SK-N-SH (cell line): ENCODE measurements at regions of chr1 and their contacts with region 1.

Region 1: GRCh38 chr1:21659099-21659923 is 9.8 kb downstream of the RAP1GAP start:
- DNase-seq: peak; percentile 96
- H3K4me3 ChIP-seq: peak overlapping the region; percentile 30 to 52
- H3K27ac ChIP-seq: no peak overlapping the region
- H3K4me1 ChIP-seq: peaks cover 0 to 10% of the 10 kb centered on the region in 2 experiments; a peak in 1 of 4 replicates
- H3K27me3 ChIP-seq: peaks cover 7% of the 10 kb centered on the region
- CTCF ChIP-seq: peak; percentile 94
- EP300 ChIP-seq: no peak
- RAD21 ChIP-seq: peak; percentile 85

Region 2: DNA sequence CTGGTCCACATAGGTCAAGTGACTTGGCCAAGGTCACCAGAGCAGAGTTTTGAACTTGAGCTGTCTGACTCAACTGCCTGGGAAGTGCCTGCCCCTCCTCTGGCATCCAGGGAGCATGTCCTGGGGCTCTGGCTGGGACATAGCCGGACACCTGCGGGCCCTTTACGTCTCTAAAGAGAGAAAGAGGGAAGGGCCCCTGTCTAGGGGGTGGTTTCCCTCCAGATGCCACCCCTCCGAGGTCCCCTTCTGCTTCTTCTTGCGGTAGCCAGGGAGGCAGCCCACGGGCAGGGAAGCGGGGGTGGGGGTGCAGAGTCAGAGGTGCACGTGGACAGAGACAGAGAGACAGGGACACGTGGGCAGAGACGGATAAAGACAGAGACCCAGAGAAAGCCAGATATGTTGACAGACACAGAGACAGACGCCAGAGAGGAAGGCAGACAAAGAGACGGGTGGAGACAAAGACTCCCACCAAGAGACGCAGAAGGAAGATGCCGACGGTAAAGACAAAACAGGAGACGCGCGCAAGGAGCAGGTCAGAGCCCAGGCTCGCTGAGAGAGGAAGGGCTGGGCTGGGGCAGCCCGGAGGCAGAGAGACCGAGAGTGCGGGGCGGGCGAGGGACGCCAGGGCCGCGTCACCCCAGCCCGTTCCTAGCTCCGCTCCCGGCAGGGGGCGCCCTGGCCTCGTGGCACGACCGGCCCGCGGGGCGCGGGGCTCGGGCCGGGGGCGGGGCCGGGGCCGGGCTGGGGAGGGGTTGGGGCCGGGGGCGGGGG is 150.5 kb before region 1 on chr1:
- CTCF ChIA-PET with region 1: interaction called, 27 read pairs
- POLR2A ChIA-PET with region 1: no interaction called
- DNase-seq: peak; percentile 97
- H3K4me3 ChIP-seq: no peak overlapping the region
- H3K27ac ChIP-seq: no peak overlapping the region
- H3K4me1 ChIP-seq: peaks cover 7 to 9% of the 10 kb centered on the region in 2 experiments; a peak in 2 of 4 replicates
- H3K27me3 ChIP-seq: no peaks in the 10 kb centered on the region; the same call in 1 of the 2 replicates
- CTCF ChIP-seq: peak; percentile 55
- EP300 ChIP-seq: no peak
- RAD21 ChIP-seq: peak; percentile 58

Region 3: DNA sequence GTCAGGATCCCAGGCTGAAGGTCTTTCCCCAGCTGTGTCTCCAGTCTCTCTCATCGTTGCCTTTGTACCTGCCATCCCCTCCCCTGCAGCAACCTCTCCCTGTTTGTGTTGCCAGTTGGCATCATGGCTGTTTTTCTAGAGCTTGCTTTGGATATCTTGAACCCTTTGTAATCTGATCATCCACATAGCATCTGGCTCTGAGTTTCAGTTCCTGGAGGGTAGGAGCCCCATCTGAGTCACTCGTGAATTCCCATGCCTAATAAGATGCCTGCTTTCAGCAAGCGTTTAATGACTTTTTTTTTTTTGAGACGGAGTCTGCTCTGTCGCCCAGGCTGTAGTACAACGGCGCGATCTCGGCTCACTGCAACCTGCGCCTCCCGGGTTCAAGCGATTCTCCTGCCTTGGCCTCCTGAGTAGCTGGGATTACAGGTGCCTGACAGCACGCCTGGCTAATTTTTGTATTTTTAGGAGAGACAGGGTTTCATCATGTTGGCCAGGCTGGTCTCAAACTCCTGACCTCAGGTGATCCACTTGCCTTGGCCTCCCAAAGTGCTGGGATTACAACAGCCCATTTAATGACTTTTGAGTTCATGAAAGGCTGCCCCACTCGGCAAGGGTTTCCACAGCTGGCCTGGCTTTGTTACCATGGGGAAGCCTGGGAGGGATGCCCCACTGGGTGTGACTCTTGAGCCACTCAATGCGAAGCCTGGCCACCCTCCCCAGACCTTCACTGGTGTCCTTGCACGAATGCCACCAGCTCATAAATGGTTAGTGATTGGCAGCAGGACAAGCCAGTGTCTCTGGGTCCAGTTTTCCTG is 138.2 kb before region 1 on chr1:
- CTCF ChIA-PET with region 1: interaction called, 10 read pairs
- POLR2A ChIA-PET with region 1: no interaction called
- DNase-seq: no peak
- H3K4me3 ChIP-seq: no peak overlapping the region
- H3K27ac ChIP-seq: no peak overlapping the region
- H3K4me1 ChIP-seq: peaks cover 0 to 7% of the 10 kb centered on the region in 2 experiments; a peak in 1 of 4 replicates
- H3K27me3 ChIP-seq: no peaks in the 10 kb centered on the region
- CTCF ChIP-seq: no peak
- EP300 ChIP-seq: no peak
- RAD21 ChIP-seq: no peak

Region 4: DNA sequence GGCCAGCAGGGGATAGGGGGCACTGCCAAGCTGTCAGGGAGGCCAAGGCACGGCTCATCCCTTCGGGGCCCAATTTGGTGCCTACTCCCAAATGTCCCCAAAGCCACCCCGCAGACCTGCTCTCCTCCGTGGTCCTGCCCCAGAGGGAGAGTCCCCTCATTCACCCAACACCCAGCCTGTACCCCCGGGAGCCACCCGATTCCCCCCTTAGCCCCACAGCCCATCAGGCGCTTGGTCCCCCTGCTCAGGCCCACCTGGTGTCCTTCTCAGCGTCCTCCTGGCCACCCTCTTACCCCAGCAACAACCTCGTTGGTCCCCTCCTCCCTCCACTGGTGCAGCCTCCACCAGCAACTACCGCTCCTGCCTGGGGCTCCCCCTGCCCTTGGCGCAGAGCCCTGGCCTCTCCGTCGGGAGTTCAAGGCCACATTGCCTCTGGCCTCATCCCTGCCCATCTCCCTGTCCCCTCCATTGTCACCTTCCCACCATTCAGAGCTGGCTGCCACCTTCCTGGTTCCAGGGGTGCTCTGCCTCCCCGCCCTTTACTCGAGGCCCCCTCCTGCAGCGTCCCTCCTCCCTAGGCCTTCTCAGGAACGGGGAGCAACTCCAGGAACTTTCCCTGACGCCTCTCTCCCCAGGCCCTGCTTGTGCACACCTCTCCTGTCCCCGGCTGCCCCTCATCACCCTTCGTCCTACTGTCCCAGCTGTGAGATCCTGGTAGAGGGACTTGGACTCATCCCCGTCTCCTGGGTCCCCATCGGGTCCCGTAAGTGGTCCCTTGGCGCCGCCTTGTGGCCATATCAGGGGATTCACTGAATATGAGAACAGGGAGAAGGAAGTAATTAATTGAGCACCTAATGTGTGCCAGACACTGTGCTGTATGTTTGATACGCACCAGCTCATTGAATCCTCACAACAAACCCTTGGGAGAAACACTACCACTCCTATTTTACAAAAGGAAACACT is 64.1 kb before region 1 on chr1:
- CTCF ChIA-PET with region 1: interaction called, 36 read pairs
- POLR2A ChIA-PET with region 1: no interaction called
- DNase-seq: peak; percentile 86
- H3K4me3 ChIP-seq: no peak overlapping the region; a peak in 1 of 4 replicates
- H3K27ac ChIP-seq: no peak overlapping the region
- H3K4me1 ChIP-seq: peaks cover 0 to 13% of the 10 kb centered on the region in 2 experiments; a peak in 2 of 4 replicates
- H3K27me3 ChIP-seq: no peaks in the 10 kb centered on the region
- CTCF ChIP-seq: peak; percentile 73
- EP300 ChIP-seq: no peak
- RAD21 ChIP-seq: peak; percentile 74

Region 5: DNA sequence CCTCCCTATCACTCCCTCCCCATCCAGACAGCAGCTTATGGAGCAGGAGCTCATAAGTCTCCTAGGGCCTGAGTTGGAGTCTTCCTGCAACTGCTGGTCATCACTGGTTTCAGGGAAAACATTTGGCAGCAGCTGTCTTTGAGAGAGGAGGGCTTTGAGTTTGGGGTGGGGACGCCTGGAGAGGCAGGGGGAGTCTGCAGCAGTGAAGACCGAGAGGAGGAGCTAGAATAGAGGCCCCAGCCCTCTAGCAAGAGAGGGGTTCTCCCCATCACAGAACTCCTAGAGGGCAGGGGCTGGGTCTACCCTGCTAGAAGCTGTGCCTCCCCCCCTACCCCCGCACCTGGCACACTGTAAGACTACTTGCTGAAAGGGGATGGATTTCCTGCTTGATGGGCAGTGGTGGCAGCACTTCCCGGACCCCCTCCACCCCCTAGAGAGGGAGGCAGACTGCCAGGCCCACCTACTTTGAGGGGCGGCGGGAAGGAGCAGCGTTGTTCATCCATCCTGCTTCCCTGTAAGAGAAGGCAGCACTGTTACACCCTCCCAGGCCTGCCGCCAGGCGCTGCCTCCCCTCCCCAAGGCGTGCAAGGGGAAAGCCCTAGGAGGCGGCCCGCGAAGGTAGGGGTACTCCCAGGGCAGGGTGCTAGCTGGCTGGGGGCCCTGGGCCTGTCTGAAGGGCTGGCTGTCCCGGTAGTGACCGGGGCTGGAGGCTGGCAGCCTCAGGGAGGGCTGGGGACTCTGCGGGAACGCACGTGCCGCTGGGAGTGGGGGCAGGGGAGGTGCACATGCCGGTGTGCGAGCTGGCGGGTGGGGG is 40.5 kb before region 1 on chr1:
- CTCF ChIA-PET with region 1: interaction called, 23 read pairs
- POLR2A ChIA-PET with region 1: no interaction called
- DNase-seq: peak; percentile 58
- H3K4me3 ChIP-seq: no peak overlapping the region
- H3K27ac ChIP-seq: no peak overlapping the region
- H3K4me1 ChIP-seq: peaks cover 0 to 46% of the 10 kb centered on the region in 2 experiments; a peak in 1 of 4 replicates
- H3K27me3 ChIP-seq: no peaks in the 10 kb centered on the region
- CTCF ChIP-seq: no peak
- EP300 ChIP-seq: no peak
- RAD21 ChIP-seq: no peak

Region 6: DNA sequence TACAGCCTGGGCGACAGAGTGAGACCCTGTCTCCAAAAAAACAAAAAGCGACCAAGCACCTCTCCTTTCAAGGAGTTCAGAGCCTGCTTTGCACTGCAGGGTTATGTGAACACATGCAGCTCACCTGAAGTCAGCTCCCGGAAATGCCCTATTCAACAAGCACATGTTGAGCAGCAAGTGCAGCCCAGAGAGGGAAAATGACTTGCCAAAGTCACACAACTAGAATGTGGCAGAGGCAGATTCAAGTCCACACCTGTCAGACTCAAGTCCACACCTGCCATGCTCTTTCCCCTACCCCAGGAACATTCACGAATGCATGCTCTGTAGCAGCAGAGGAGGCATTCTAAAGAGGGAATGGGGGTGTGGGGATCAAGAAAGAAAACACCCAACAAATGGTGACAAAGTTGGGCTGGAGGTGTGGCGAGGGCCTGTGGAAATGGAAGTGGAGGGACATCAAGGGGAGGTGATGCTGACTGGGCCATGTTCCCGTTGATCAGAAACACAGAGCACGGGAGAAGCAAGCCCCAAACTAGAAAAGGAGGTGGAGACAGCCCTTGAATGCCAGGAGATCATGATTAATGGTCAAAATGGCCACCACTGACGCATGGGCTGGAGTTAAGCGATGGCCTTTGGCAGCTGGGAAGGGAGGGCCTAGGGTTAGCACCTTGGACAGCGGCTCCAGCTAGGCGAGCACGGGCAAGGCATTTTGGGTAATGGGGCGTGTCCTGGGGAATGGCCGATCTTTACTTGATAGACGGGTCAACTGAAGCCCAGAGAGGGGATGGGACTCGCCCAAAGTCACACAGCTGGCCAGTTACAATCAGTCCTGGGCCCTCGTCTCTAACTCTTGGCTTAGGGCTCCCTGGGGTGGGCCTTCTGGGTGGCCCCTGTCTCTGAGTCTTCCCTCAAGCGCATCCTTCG is 11.6 kb before region 1 on chr1:
- CTCF ChIA-PET with region 1: interaction called, 18 read pairs
- POLR2A ChIA-PET with region 1: no interaction called
- DNase-seq: no peak
- H3K4me3 ChIP-seq: no peak overlapping the region
- H3K27ac ChIP-seq: no peak overlapping the region
- H3K4me1 ChIP-seq: peaks cover 0 to 11% of the 10 kb centered on the region in 2 experiments; a peak in 1 of 4 replicates
- H3K27me3 ChIP-seq: peaks cover 6% of the 10 kb centered on the region
- CTCF ChIP-seq: no peak
- EP300 ChIP-seq: no peak
- RAD21 ChIP-seq: no peak

Region 7: GRCh38 chr1:21669258-21670058 is 10.1 kb after region 1 on chr1 and contains the start of gene RAP1GAP:
- CTCF ChIA-PET with region 1: interaction called, 22 read pairs
- POLR2A ChIA-PET with region 1: interaction called, 3 read pairs
- DNase-seq: peak; percentile 86
- H3K4me3 ChIP-seq: peak within 1 kb of the TSS in 1 of 2 experiments; percentile 44; a peak in 2 of 4 replicates
- H3K27ac ChIP-seq: no peak within 1 kb of the TSS
- H3K4me1 ChIP-seq: peaks cover 9 to 30% of the 10 kb centered on the region in 2 experiments; a peak in 3 of 4 replicates
- H3K27me3 ChIP-seq: peaks cover 8% of the 10 kb centered on the region; the same call in 1 of the 2 replicates
- CTCF ChIP-seq: no peak
- EP300 ChIP-seq: no peak
- RAD21 ChIP-seq: no peak
- polyA plus RNA-seq, gene RAP1GAP: 0.78 and 0.99 TPM in 2 replicates